CD4-positive, alpha-beta T cell (primary cell): ENCODE measurements at regions of chr1 and their contacts with region 1.

Region 1: DNA sequence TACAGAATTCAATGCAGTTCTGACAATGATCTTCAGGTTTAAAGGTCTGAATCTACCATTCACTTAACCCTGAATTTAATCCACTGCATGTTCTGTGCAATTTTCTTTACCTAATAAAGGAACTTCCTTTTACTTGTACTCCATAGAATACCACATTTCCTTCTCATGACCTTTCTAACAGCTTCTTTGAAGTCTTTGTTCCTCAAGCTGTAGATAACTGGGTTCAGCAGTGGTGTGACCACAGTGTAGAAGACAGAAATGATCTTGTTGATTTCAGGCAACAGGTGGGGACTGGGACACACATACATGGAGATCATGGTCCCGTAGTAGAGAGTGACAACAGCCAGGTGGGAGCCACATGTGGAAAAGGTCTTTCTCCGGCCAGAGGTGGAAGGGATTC is 878 bp downstream of the OR11L1 start:
- DNase-seq: no peak
- ATAC-seq: no peak
- H3K4me3 ChIP-seq: no peak overlapping the region
- H3K4me3 Mint-ChIP-seq: no peak overlapping the region
- H3K27ac ChIP-seq: no peak overlapping the region
- H3K27ac Mint-ChIP-seq: no peak overlapping the region
- H3K4me1 ChIP-seq: no peaks in the 10 kb centered on the region
- H3K4me1 Mint-ChIP-seq: no peaks in the 10 kb centered on the region
- H3K27me3 ChIP-seq: no peaks in the 10 kb centered on the region
- H3K27me3 Mint-ChIP-seq: no peaks in the 10 kb centered on the region
- CTCF ChIP-seq: no peak

Region 2: DNA sequence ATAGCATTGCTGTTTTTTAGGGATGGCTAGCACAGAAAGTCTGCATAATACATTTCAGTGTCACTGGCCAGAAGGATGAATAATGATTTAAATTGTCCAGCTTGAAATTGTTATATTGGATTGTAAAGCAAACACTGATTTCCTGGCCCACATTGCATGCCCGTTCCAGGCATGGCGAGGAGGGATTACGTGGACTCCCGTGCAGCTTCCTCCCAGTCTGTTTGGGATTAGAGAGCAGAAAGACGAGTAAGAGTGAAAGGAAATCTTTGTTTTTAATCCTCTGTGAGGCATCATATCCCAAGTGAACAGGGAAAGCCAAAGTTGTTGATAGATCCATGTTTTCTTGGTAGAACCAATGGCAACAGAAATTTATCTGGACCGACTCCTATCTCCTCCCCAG is 24.6 kb after region 1 on chr1:
- CTCF ChIA-PET with region 1: no interaction called
- POLR2A ChIA-PET with region 1: no interaction called
- intact Hi-C with region 1: loop called in 1 of 2 experiments (anchors 2 kb)
- DNase-seq: no peak
- ATAC-seq: no peak
- H3K4me3 ChIP-seq: no peak overlapping the region
- H3K4me3 Mint-ChIP-seq: no peak overlapping the region
- H3K27ac ChIP-seq: no peak overlapping the region
- H3K27ac Mint-ChIP-seq: no peak overlapping the region
- H3K4me1 ChIP-seq: no peaks in the 10 kb centered on the region
- H3K4me1 Mint-ChIP-seq: no peaks in the 10 kb centered on the region
- H3K27me3 ChIP-seq: no peaks in the 10 kb centered on the region
- H3K27me3 Mint-ChIP-seq: peaks cover 22% of the 10 kb centered on the region
- CTCF ChIP-seq: no peak